Breast epithelium (tissue), 4 donors: ENCODE measurements at regions of chr6 and their contacts with region 1.

Region 1: GRCh38 chr6:143223895-143224294 is 163.2 kb downstream of the AIG1 start:
- DNase-seq: no peak
- H3K4me3 ChIP-seq: no peak overlapping the region
- H3K27ac ChIP-seq: no peak overlapping the region
- H3K4me1 ChIP-seq: no peaks in the 10 kb centered on the region
- H3K27me3 ChIP-seq: no peaks in the 10 kb centered on the region
- CTCF ChIP-seq: no peak
- POLR2A ChIP-seq: no peak

Region 2: GRCh38 chr6:142088858-142089216 is 1135.1 kb before region 1 on chr6:
- intact Hi-C with region 1: no loop called
- DNase-seq: no peak
- H3K4me3 ChIP-seq: no peak overlapping the region
- H3K27ac ChIP-seq: no peak overlapping the region
- H3K4me1 ChIP-seq: no peaks in the 10 kb centered on the region
- H3K27me3 ChIP-seq: peaks cover 0 to 21% of the 10 kb centered on the region in 2 donors
- CTCF ChIP-seq: no peak
- POLR2A ChIP-seq: no peak

Region 3: GRCh38 chr6:142152731-142153130 is 1071.2 kb before region 1 on chr6:
- intact Hi-C with region 1: loop called (anchors 5 kb)
- DNase-seq: no peak
- H3K4me3 ChIP-seq: no peak overlapping the region
- H3K27ac ChIP-seq: no peak overlapping the region
- H3K4me1 ChIP-seq: peaks cover 0 to 11% of the 10 kb centered on the region in 2 donors
- H3K27me3 ChIP-seq: no peaks in the 10 kb centered on the region
- CTCF ChIP-seq: no peak
- POLR2A ChIP-seq: no peak

Region 4: GRCh38 chr6:143236151-143236798 is 12.4 kb after region 1 on chr6:
- intact Hi-C with region 1: no loop called
- DNase-seq: no peak
- H3K4me3 ChIP-seq: no peak overlapping the region
- H3K27ac ChIP-seq: no peak overlapping the region
- H3K4me1 ChIP-seq: no peaks in the 10 kb centered on the region
- H3K27me3 ChIP-seq: no peaks in the 10 kb centered on the region
- CTCF ChIP-seq: no peak
- POLR2A ChIP-seq: no peak

Region 5: DNA sequence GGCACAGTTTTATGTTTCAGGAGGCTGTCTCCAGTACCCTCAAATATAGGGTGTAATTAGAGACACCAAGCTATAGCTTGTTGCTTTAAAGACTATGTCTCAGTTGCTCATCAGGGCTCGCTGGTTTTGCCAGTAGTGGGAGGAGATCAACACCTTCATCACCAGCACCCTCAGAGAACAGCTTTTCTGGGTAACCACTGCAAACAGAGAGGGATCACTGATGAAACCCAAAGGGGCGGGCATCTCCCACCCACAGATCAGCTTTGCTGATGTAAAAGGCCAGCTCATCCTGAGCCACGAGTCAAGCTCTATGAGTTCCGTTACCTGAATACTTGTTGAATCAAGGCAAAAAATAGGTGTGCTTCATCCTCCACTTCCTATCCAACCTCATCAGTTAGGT is 24.5 kb after region 1 on chr6:
- intact Hi-C with region 1: no loop called
- DNase-seq: no peak
- H3K4me3 ChIP-seq: no peak overlapping the region
- H3K27ac ChIP-seq: no peak overlapping the region
- H3K4me1 ChIP-seq: no peaks in the 10 kb centered on the region
- H3K27me3 ChIP-seq: no peaks in the 10 kb centered on the region
- CTCF ChIP-seq: no peak
- POLR2A ChIP-seq: no peak